ENCODE measurements at regions of chr11 and their contacts with region 1.

Region 1: DNA sequence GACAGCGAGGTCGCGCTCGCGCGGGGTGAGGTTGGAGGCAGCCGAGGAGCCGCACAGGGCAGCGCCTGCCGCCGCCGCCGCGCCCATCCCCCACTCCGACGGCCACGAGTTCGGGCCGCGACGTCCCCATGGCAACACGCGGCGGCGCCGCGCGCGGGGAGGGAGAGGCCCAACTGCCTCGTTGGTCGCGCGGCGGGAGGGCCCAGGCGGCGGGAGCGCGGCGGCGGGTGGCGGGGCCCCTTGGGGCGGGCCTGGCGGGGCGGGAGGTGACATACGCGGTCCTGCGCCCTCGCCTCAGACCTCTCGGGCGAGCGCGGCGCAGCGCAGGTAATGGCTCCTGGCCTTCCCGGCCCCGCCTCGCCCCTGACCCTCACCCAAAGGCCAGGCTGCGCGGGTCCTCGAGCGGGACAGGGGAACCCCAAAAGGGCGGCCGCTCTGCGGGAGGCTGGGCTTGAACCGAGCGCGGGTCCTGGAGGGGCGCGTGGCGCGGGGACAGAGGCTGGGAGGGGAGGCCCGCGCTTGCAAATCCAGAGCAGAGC is at the start of gene DEUP1:
- DNase-seq: peak in 1 of 9 donors; percentile 23
- ATAC-seq: no peak
- H3K4me3 ChIP-seq: no peak within 1 kb of the TSS
- H3K4me3 Mint-ChIP-seq: peak within 1 kb of the TSS in 8 of 10 donors; percentile 9 to 76 (median 32)
- H3K27ac ChIP-seq: no peak within 1 kb of the TSS
- H3K27ac Mint-ChIP-seq: no peak within 1 kb of the TSS
- H3K4me1 ChIP-seq: no peaks in the 10 kb centered on the region
- H3K4me1 Mint-ChIP-seq: peaks cover 0 to 14% (median 3%) of the 10 kb centered on the region in 7 donors
- H3K27me3 ChIP-seq: no peaks in the 10 kb centered on the region
- H3K27me3 Mint-ChIP-seq: peaks cover 48 to 68% (median 53%) of the 10 kb centered on the region in 5 donors
- total RNA-seq, gene DEUP1: not detected

Region 2: GRCh38 chr11:92960886-92961285 is 369.6 kb before region 1 on chr11:
- CTCF ChIA-PET with region 1: no interaction called
- POLR2A ChIA-PET with region 1: no interaction called
- intact Hi-C with region 1: no loop called
- DNase-seq: no peak
- ATAC-seq: no peak
- H3K4me3 ChIP-seq: no peak overlapping the region
- H3K4me3 Mint-ChIP-seq: no peak overlapping the region
- H3K27ac ChIP-seq: no peak overlapping the region
- H3K27ac Mint-ChIP-seq: no peak overlapping the region
- H3K4me1 ChIP-seq: no peaks in the 10 kb centered on the region
- H3K4me1 Mint-ChIP-seq: no peaks in the 10 kb centered on the region
- H3K27me3 ChIP-seq: no peaks in the 10 kb centered on the region
- H3K27me3 Mint-ChIP-seq: peaks cover 0 to 20% (median 12%) of the 10 kb centered on the region in 5 donors

Region 3: GRCh38 chr11:93761910-93762309 is 431.4 kb after region 1 on chr11:
- CTCF ChIA-PET with region 1: no interaction called
- POLR2A ChIA-PET with region 1: no interaction called
- intact Hi-C with region 1: loop called in 1 of 2 experiments (anchors 5 kb)
- DNase-seq: no peak
- ATAC-seq: no peak
- H3K4me3 ChIP-seq: no peak overlapping the region
- H3K4me3 Mint-ChIP-seq: no peak overlapping the region
- H3K27ac ChIP-seq: no peak overlapping the region
- H3K27ac Mint-ChIP-seq: peak overlapping the region in 1 of 9 donors; percentile 43
- H3K4me1 ChIP-seq: no peaks in the 10 kb centered on the region
- H3K4me1 Mint-ChIP-seq: no peaks in the 10 kb centered on the region
- H3K27me3 ChIP-seq: no peaks in the 10 kb centered on the region
- H3K27me3 Mint-ChIP-seq: no peaks in the 10 kb centered on the region

Measured in naive thymus-derived CD4-positive, alpha-beta T cell (primary cell).